ENCODE measurements at regions of chr6 and their contacts with region 1.

Region 1: GRCh38 chr6:142566628-142567396 is 265.0 kb downstream of the ADGRG6 start:
- DNase-seq: peak; percentile 89
- H3K4me3 Mint-ChIP-seq: no peak overlapping the region
- H3K27ac Mint-ChIP-seq: no peak overlapping the region
- H3K4me1 Mint-ChIP-seq: peaks cover 32% of the 10 kb centered on the region
- H3K27me3 Mint-ChIP-seq: no peaks in the 10 kb centered on the region

Region 2: GRCh38 chr6:142548571-142548970 is 18.2 kb before region 1 on chr6:
- intact Hi-C with region 1: loop called (anchors 2 kb)
- DNase-seq: no peak
- H3K4me3 Mint-ChIP-seq: no peak overlapping the region
- H3K27ac Mint-ChIP-seq: no peak overlapping the region
- H3K4me1 Mint-ChIP-seq: peaks cover 27% of the 10 kb centered on the region
- H3K27me3 Mint-ChIP-seq: no peaks in the 10 kb centered on the region

Region 3: DNA sequence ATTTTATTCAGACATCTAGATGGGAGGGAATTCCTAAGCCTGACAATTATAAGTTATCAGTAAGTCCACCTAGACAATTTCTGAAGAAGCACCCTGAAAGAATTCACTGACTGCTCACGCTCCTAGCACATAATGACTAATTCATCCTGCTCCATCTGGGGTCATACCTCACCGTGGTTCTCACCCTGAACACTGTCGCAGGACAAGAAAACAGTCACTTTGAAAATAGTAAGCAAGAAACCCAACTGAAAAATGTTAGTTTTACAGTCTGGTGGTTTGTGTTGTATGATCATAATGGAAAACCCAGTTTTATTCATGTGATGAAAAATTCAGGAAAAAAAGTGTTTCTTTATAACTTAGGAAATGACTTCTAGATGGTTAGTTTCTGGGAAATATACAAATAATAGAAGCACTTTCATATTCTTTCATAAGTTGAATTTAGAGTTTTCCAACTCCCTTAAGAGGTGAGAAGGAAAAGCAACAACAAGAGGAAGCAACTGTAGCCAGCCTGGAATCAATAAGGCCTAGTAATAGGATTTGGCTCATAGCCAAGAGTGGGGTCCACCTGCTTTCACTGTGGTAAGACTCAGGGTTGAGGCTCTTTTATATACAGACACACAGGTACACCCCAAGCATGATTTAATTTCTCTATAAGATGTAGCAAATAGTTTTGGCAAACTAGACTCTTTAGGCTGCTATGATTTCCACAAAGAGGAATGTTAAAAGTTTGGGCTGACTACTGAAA is 284.0 kb after region 1 on chr6:
- intact Hi-C with region 1: loop called (anchors 2 kb)
- DNase-seq: peak; percentile 74
- H3K4me3 Mint-ChIP-seq: peak overlapping the region; percentile 70
- H3K27ac Mint-ChIP-seq: peak overlapping the region; percentile 87
- H3K4me1 Mint-ChIP-seq: peaks cover 83% of the 10 kb centered on the region
- H3K27me3 Mint-ChIP-seq: no peaks in the 10 kb centered on the region

Region 4: GRCh38 chr6:143427109-143427817 is 860.5 kb after region 1 on chr6:
- intact Hi-C with region 1: loop called (anchors 5 kb)
- DNase-seq: peak; percentile 92
- H3K4me3 Mint-ChIP-seq: no peak overlapping the region
- H3K27ac Mint-ChIP-seq: no peak overlapping the region
- H3K4me1 Mint-ChIP-seq: peaks cover 9% of the 10 kb centered on the region
- H3K27me3 Mint-ChIP-seq: no peaks in the 10 kb centered on the region